SK-N-SH (cell line): ENCODE measurements at regions of chr16 and their contacts with region 1.

Region 1: DNA sequence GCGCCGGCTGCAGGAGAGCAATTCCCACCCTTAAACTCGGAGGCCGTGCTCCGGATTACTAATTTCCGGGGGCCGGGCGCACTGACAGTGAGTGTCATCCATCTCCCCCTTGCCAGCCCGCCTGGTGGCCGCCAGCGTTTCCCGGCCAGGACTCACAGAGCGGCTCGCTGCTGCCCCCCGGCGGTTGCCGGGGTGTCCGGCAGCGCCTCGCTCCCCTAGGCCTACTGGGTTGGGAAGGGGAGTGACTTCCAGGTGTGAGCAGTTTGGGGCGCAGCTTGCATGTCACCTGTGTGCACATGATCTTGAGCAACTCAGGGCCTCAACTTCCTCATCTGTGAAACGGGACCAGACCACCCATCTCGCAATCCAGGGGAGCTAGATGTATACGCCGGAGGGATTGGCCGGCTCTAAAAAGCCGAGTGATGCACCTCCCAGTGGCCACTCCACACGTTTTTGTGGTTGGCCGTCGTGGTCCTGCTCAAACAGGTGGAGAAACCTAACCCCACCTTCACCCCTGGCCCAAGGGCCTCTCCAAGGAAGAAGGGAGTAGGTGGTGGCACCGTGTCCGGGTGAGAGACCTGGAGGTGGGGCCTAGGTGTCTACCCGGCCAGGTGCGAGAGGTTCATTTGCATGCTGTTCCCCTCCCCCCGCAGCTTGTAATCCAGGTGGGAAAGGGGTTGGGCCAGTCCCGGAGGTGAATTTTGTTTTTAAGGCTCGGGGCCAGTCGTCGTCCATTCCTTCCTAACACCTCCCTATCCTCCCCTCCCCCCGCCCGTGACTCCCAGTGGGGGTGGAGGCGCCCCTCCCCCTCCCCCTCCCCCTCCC is 2.4 kb upstream of the GSE1 start:
- DNase-seq: peak; percentile 83
- H3K4me3 ChIP-seq: peak overlapping the region; percentile 42 to 86; a peak in 3 of 4 replicates
- H3K27ac ChIP-seq: peak overlapping the region; percentile 74 to 97
- H3K4me1 ChIP-seq: peaks cover 14 to 59% of the 10 kb centered on the region in 2 experiments
- H3K27me3 ChIP-seq: no peaks in the 10 kb centered on the region
- CTCF ChIP-seq: peak; percentile 91
- EP300 ChIP-seq: peak in 1 of 2 experiments; percentile 52; a peak in 2 of 4 replicates
- RAD21 ChIP-seq: peak; percentile 94

Region 2: DNA sequence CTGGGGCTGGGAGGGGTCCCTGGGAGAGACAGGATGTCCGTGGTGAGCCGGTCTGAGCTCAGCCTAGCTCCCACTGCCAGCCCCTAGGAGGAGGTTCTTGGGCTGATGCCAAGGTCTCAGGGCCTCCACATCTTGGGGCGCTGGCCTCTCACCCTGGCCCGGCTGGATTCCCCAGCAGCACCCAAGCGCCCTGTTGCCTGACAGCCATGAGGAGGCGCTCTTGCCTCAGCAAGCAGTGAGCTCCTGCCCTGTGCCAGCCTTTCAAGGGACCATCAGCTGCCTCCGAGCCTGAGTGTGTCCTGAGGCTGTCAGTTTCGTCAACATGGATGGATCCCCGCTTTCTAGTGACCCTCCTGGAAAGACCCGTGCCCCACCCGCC is 263.5 kb before region 1 on chr16:
- CTCF ChIA-PET with region 1: interaction called, 16 read pairs
- POLR2A ChIA-PET with region 1: interaction called, 4 read pairs
- DNase-seq: peak; percentile 63
- H3K4me3 ChIP-seq: no peak overlapping the region
- H3K27ac ChIP-seq: peak overlapping the region in 1 of 2 experiments; percentile 97; a peak in 1 of 4 replicates
- H3K4me1 ChIP-seq: peaks cover 13 to 60% of the 10 kb centered on the region in 2 experiments; a peak in 2 of 4 replicates
- H3K27me3 ChIP-seq: no peaks in the 10 kb centered on the region
- CTCF ChIP-seq: peak; percentile 45
- EP300 ChIP-seq: no peak
- RAD21 ChIP-seq: peak; percentile 73

Region 3: GRCh38 chr16:85393674-85394483 is 216.8 kb before region 1 on chr16:
- CTCF ChIA-PET with region 1: interaction called, 20 read pairs
- POLR2A ChIA-PET with region 1: interaction called, 7 read pairs
- DNase-seq: peak; percentile 90
- H3K4me3 ChIP-seq: peak overlapping the region in 1 of 2 experiments; percentile 37; a peak in 1 of 4 replicates
- H3K27ac ChIP-seq: peak overlapping the region; percentile 75 to 99; a peak in 3 of 4 replicates
- H3K4me1 ChIP-seq: peaks cover 43 to 78% of the 10 kb centered on the region in 2 experiments
- H3K27me3 ChIP-seq: no peaks in the 10 kb centered on the region
- CTCF ChIP-seq: peak; percentile 88
- EP300 ChIP-seq: no peak
- RAD21 ChIP-seq: peak; percentile 71

Region 4: GRCh38 chr16:85457381-85457780 is 153.3 kb before region 1 on chr16:
- CTCF ChIA-PET with region 1: interaction called, 16 read pairs
- POLR2A ChIA-PET with region 1: interaction called, 3 read pairs
- DNase-seq: no peak
- H3K4me3 ChIP-seq: no peak overlapping the region
- H3K27ac ChIP-seq: peak overlapping the region in 1 of 2 experiments; percentile 58; a peak in 2 of 4 replicates
- H3K4me1 ChIP-seq: peaks cover 17 to 78% of the 10 kb centered on the region in 2 experiments; a peak in 3 of 4 replicates
- H3K27me3 ChIP-seq: no peaks in the 10 kb centered on the region
- CTCF ChIP-seq: no peak
- EP300 ChIP-seq: no peak
- RAD21 ChIP-seq: no peak

Region 5: GRCh38 chr16:85522842-85523601 is 87.7 kb before region 1 on chr16:
- CTCF ChIA-PET with region 1: no interaction called
- POLR2A ChIA-PET with region 1: no interaction called
- DNase-seq: no peak
- H3K4me3 ChIP-seq: no peak overlapping the region
- H3K27ac ChIP-seq: no peak overlapping the region
- H3K4me1 ChIP-seq: peaks cover 0 to 45% of the 10 kb centered on the region in 2 experiments; a peak in 2 of 4 replicates
- H3K27me3 ChIP-seq: no peaks in the 10 kb centered on the region
- CTCF ChIP-seq: no peak
- EP300 ChIP-seq: no peak
- RAD21 ChIP-seq: no peak

Region 6: GRCh38 chr16:85554112-85554813 is 56.5 kb before region 1 on chr16:
- CTCF ChIA-PET with region 1: interaction called, 51 read pairs
- POLR2A ChIA-PET with region 1: interaction called, 4 read pairs
- DNase-seq: peak; percentile 82
- H3K4me3 ChIP-seq: peak overlapping the region; percentile 75 to 84
- H3K27ac ChIP-seq: peak overlapping the region; percentile 73 to 99
- H3K4me1 ChIP-seq: peaks cover 10 to 51% of the 10 kb centered on the region in 2 experiments; a peak in 3 of 4 replicates
- H3K27me3 ChIP-seq: no peaks in the 10 kb centered on the region
- CTCF ChIP-seq: no peak
- EP300 ChIP-seq: peak in 1 of 2 experiments; percentile 87; a peak in 1 of 4 replicates
- RAD21 ChIP-seq: peak; percentile 15; the same call in 1 of the 2 replicates

Region 7: GRCh38 chr16:85569615-85570212 is 41.0 kb before region 1 on chr16:
- CTCF ChIA-PET with region 1: interaction called, 51 read pairs
- POLR2A ChIA-PET with region 1: no interaction called
- DNase-seq: peak; percentile 65
- H3K4me3 ChIP-seq: no peak overlapping the region; a peak in 1 of 4 replicates
- H3K27ac ChIP-seq: peak overlapping the region in 1 of 2 experiments; percentile 50; a peak in 2 of 4 replicates
- H3K4me1 ChIP-seq: peaks cover 20 to 38% of the 10 kb centered on the region in 2 experiments
- H3K27me3 ChIP-seq: no peaks in the 10 kb centered on the region
- CTCF ChIP-seq: no peak
- EP300 ChIP-seq: no peak
- RAD21 ChIP-seq: no peak

Region 8: DNA sequence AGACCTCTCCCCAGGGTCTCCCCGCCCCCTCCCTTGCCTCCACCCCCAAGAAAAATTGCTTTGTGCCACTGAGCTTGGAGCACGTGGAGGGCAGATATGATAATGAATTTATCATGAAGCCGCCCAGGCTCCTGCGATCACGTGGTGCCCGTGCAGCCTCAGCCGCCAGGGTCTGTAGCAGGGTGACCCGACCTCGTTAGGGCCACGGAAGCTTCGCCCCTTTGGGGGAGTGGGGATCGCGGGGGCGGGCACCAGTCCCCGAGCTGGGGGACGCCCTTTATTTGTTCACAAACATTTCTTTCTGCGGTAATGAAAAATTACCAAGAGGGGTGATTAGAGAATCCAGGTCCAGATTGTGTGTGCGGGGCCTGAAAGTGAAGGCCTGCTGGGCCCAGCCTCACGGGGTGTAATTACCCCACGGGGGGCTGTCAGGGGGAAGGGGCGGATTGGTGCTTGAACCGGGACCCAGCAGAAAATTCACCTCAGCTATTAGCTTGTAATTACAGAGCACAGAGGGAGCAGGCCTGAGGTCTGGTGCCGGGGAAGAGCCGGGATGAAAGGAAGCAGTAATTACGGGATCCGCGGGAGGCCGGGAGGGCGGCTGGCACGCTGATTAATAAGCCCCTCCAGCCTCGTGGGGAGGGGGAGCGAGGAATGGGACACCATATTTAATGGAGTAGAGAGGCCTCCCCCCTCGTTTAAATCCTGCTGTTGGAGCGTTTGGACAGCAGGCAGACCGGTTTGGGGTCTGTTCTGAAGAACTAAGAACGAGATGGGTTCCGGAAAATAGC is 15.7 kb after region 1 on chr16:
- CTCF ChIA-PET with region 1: interaction called, 106 read pairs
- POLR2A ChIA-PET with region 1: interaction called, 9 read pairs
- DNase-seq: peak; percentile 89
- H3K4me3 ChIP-seq: no peak overlapping the region
- H3K27ac ChIP-seq: peak overlapping the region; percentile 13 to 97; a peak in 2 of 4 replicates
- H3K4me1 ChIP-seq: peaks cover 6 to 81% of the 10 kb centered on the region in 2 experiments; a peak in 3 of 4 replicates
- H3K27me3 ChIP-seq: no peaks in the 10 kb centered on the region
- CTCF ChIP-seq: no peak
- EP300 ChIP-seq: peak in 1 of 2 experiments; percentile 59; a peak in 2 of 4 replicates
- RAD21 ChIP-seq: no peak